Common myeloid progenitor, CD34-positive (primary cell): ENCODE measurements at regions of chr6 and their contacts with region 1.

Region 1: GRCh38 chr6:593139-593906 is 63.6 kb downstream of the HUS1B start:
- DNase-seq: peak; percentile 54 to 82 (median 72)
- H3K4me3 ChIP-seq: no peak overlapping the region
- H3K27ac ChIP-seq: no peak overlapping the region
- H3K4me1 ChIP-seq: no peaks in the 10 kb centered on the region
- H3K27me3 ChIP-seq: no peaks in the 10 kb centered on the region

Region 2: GRCh38 chr6:610882-611281 is 17.6 kb after region 1 on chr6:
- CTCF ChIA-PET with region 1: no interaction called
- POLR2A ChIA-PET with region 1: no interaction called
- DNase-seq: peak in 1 of 3 donors; percentile 4
- H3K4me3 ChIP-seq: no peak overlapping the region
- H3K27ac ChIP-seq: no peak overlapping the region
- H3K4me1 ChIP-seq: peaks cover 0 to 8% (median 2%) of the 10 kb centered on the region in 4 experiments
- H3K27me3 ChIP-seq: no peaks in the 10 kb centered on the region

Region 3: GRCh38 chr6:722077-722524 is 128.8 kb after region 1 on chr6:
- CTCF ChIA-PET with region 1: interaction called, 18 read pairs
- POLR2A ChIA-PET with region 1: no interaction called
- DNase-seq: peak; percentile 71 to 82 (median 79)
- H3K4me3 ChIP-seq: peak overlapping the region in 1 of 7 experiments; percentile 31
- H3K27ac ChIP-seq: no peak overlapping the region
- H3K4me1 ChIP-seq: peaks cover 0 to 10% (median 5%) of the 10 kb centered on the region in 4 experiments
- H3K27me3 ChIP-seq: peaks cover 0 to 10% (median 4%) of the 10 kb centered on the region in 5 experiments

Region 4: DNA sequence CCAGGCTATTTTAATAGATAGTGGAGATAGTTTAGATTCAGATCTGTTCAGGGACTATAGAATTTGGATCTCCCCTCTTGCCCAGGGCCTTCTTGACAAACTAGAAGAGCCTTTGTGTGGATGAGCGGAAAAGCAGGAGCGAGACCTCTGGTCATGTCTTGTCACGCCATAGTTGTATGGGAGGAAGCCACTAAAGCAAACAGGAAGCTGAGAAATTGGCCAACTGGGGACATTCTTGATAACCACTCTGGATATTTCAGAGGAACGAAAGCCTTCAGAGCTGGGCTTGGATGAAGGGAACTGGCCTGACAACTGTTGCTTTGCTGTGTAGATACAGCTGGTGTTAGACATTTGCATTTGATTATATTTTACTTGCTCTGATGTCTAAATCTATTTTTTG is 153.7 kb after region 1 on chr6:
- CTCF ChIA-PET with region 1: no interaction called
- POLR2A ChIA-PET with region 1: no interaction called
- DNase-seq: no peak
- H3K4me3 ChIP-seq: no peak overlapping the region
- H3K27ac ChIP-seq: no peak overlapping the region
- H3K4me1 ChIP-seq: no peaks in the 10 kb centered on the region
- H3K27me3 ChIP-seq: peaks cover 0 to 4% (median 0%) of the 10 kb centered on the region in 5 experiments

Region 5: DNA sequence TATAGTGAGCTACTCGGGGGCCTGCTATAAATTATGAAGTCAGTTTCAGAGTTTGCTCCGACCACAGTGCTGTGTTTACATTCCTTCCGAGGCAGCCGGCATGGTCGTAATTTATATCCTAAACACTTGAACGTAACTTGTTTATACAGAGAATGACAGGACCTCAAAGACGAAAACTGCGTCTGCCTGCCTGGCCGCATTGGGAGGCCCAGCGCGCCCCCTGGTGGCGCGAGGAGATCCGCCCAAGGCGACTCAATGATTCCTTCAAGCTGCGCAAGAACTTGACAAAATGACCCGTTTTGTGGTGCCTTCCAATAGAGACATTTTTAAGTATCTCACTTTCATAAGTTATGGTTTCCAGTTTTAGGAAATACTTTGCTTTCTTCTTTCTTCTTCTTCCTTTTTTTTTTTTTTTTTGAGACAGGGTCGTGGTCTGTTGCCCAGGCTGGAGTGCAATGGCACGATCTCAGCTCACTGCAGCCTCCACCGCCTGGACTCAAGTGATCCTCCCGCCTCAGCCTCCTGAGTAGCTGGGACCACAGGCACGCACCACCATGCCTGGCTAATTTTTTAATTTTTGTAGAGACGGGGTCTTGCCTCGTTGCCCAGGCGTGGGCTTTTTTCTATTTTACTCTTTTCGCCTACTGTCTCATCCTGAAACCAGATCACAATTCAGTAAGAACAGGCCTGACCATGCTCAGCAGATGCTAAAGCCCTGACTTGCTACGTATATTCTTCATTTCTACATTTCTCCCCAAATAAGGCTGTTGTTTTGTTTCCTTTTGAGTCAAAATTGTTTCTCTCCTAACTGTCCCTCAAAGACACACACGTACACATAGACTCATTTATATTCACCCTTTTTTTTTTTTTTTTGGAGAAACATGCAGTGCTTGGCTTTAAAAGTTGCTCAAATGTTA is 803.9 kb after region 1 on chr6:
- CTCF ChIA-PET with region 1: interaction called, 41 read pairs
- POLR2A ChIA-PET with region 1: no interaction called
- DNase-seq: peak; percentile 78 to 88 (median 86)
- H3K4me3 ChIP-seq: no peak overlapping the region
- H3K27ac ChIP-seq: no peak overlapping the region
- H3K4me1 ChIP-seq: peaks cover 0 to 17% (median 7%) of the 10 kb centered on the region in 4 experiments
- H3K27me3 ChIP-seq: peaks cover 15 to 99% (median 41%) of the 10 kb centered on the region in 5 experiments

Region 6: GRCh38 chr6:1436334-1437306 is 843.3 kb after region 1 on chr6:
- CTCF ChIA-PET with region 1: interaction called, 22 read pairs
- POLR2A ChIA-PET with region 1: no interaction called
- DNase-seq: peak; percentile 68 to 85 (median 81)
- H3K4me3 ChIP-seq: no peak overlapping the region
- H3K27ac ChIP-seq: no peak overlapping the region
- H3K4me1 ChIP-seq: no peaks in the 10 kb centered on the region
- H3K27me3 ChIP-seq: peaks cover 2 to 51% (median 16%) of the 10 kb centered on the region in 5 experiments